Breast epithelium (tissue), 4 donors: ENCODE measurements at regions of chr6 and their contacts with region 1.

Region 1: GRCh38 chr6:40520678-40521077 is 66.5 kb downstream of the LRFN2 start:
- DNase-seq: no peak
- H3K4me3 ChIP-seq: no peak overlapping the region
- H3K27ac ChIP-seq: no peak overlapping the region
- H3K4me1 ChIP-seq: no peaks in the 10 kb centered on the region
- H3K27me3 ChIP-seq: peaks cover 0 to 7% of the 10 kb centered on the region in 2 donors
- CTCF ChIP-seq: no peak
- POLR2A ChIP-seq: no peak

Region 2: DNA sequence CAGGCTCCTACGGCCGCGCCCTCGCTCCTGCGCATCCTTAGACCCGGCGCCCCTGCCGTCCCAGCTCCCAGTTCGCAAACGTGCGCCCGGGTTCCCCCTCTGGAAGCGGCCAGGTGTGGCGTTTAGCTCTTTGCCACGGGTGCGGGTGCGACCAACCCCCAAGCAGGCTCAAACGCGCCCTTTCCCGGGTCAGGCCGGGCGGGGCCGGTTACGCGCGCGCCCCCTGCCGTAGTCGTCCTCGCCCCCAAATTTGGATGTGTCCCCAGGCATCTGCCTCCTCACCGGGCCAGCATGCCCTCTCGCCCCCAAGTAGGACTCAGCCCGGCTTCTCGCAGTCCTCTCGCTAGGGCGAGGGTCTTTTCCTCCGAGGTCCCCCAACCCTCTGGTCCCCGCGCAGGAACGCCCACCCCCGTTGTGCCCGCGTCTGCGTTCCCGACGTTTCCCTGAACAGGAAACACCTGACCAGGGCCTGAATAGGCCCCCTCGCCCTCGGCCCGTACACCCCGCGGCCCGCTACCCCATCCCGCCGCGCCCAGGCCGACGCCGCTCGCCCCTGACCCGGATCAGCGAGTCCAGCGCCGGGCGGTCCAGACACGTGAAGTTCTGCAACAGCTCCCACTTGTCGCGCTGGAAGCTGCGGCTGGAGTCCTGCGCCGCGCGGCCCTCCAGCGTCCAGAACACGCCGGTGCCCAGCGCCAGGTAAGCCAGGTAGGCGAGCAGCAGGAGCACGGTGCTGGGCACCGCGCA is 1207.0 kb before region 1 on chr6:
- intact Hi-C with region 1: no loop called
- DNase-seq: no peak
- H3K4me3 ChIP-seq: peak overlapping the region in 2 of 3 donors; percentile 46 to 57
- H3K27ac ChIP-seq: no peak overlapping the region
- H3K4me1 ChIP-seq: peaks cover 0 to 4% of the 10 kb centered on the region in 2 donors
- H3K27me3 ChIP-seq: peaks cover 0 to 45% of the 10 kb centered on the region in 2 donors
- CTCF ChIP-seq: no peak
- POLR2A ChIP-seq: no peak

Region 3: GRCh38 chr6:40804905-40805304 is 284.2 kb after region 1 on chr6:
- intact Hi-C with region 1: no loop called
- DNase-seq: no peak
- H3K4me3 ChIP-seq: no peak overlapping the region
- H3K27ac ChIP-seq: no peak overlapping the region
- H3K4me1 ChIP-seq: no peaks in the 10 kb centered on the region
- H3K27me3 ChIP-seq: no peaks in the 10 kb centered on the region
- CTCF ChIP-seq: no peak
- POLR2A ChIP-seq: no peak

Region 4: DNA sequence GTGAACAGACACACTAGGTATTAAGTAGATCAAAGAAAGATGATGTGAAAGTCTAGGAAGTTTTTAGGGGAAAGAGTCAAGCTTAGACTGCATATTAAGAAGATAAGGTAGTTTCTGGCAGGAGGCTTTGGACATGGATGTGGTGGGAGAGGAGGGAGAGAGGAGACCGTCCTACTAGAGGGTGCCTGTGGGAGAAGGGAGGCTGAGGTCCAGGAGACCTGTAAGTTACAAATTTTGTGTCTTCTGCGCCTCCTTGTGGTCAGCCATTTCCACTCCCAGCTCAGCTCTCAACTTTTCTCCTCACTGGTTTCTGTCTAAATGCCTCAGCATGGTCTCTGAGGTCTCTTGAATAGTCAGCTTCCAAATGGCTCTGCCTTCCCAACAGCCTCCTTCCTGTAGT is 324.9 kb after region 1 on chr6:
- intact Hi-C with region 1: loop called (anchors 5 kb)
- DNase-seq: no peak
- H3K4me3 ChIP-seq: no peak overlapping the region
- H3K27ac ChIP-seq: no peak overlapping the region
- H3K4me1 ChIP-seq: no peaks in the 10 kb centered on the region
- H3K27me3 ChIP-seq: no peaks in the 10 kb centered on the region
- CTCF ChIP-seq: peak in 1 of 3 donors; percentile 38
- POLR2A ChIP-seq: no peak